ENCODE measurements at regions of chr20 and their contacts with region 1.

Region 1: GRCh38 chr20:24565835-24566351 is 96.5 kb downstream of the SYNDIG1 start:
- DNase-seq: no peak
- H3K4me3 ChIP-seq: no peak overlapping the region
- H3K27ac ChIP-seq: no peak overlapping the region
- H3K4me1 ChIP-seq: no peaks in the 10 kb centered on the region
- H3K27me3 ChIP-seq: peaks cover 0 to 6% of the 10 kb centered on the region in 2 donors
- CTCF ChIP-seq: no peak
- POLR2A ChIP-seq: no peak

Region 2: GRCh38 chr20:24738981-24739633 is 173.2 kb after region 1 on chr20:
- intact Hi-C with region 1: loop called (anchors 5 kb)
- DNase-seq: no peak
- H3K4me3 ChIP-seq: no peak overlapping the region
- H3K27ac ChIP-seq: no peak overlapping the region
- H3K4me1 ChIP-seq: no peaks in the 10 kb centered on the region
- H3K27me3 ChIP-seq: no peaks in the 10 kb centered on the region
- CTCF ChIP-seq: no peak
- POLR2A ChIP-seq: no peak

Measured in breast epithelium (tissue), 4 donors.